PC-9 (cell line): ENCODE measurements at regions of chr2 and their contacts with region 1.

Region 1: DNA sequence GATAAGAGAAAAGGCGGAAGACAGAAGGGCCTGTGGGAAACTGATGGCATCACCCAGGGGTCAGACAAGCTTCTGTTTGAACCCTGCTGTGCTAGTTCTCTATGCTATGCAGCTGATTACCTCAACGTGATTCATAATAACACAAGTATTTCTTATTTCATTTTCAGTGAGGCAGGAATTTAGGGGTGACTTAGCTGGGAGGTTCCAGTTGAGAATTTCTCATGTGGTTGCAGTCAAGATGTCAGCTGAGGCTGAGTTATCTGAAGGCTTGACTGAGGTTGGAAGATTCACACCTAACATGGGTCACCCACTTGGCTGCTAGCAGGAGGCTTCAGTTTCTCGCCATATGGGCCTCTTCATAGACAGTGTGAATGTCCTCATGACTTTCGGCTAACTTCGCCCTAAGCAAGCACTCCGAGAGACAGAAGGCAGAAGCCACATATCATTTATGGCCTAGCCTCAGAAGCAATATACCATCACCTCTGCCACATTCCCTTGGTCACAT is 34.0 kb upstream of the TMEM131 start:
- DNase-seq: no peak
- H3K4me3 ChIP-seq: no peak overlapping the region
- H3K27ac ChIP-seq: no peak overlapping the region
- H3K4me1 ChIP-seq: no peaks in the 10 kb centered on the region
- H3K27me3 ChIP-seq: no peaks in the 10 kb centered on the region
- CTCF ChIP-seq: no peak

Region 2: DNA sequence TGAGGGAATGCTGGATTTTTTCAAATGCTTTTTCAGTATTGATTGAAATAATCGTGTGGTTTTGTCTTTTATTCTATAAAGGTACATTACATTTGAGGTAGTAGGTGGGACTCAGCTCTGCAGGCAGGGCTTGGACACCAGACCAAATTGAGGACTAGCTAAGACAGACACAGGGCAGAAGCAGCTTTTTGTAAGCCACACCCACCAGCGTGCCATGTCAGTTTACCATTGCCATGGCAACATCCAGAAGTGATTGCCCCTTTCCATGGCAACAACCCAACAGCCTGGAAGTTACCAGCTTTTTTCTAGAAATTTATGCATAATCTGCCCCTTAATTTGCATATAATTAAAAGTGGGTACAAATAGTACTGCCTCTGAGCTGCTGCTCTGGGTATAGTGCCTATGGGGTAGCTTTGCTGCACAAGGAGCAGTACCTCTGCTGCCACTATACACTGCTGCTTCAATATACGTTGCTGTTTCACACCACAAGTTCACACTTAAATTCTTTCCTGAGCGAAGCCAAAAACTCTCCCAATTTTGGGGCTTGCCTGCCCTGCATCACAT is 33.6 kb after region 1 on chr2:
- CTCF ChIA-PET with region 1: no interaction called
- POLR2A ChIA-PET with region 1: interaction called, 10 read pairs
- intact Hi-C with region 1: no loop called
- DNase-seq: no peak
- H3K4me3 ChIP-seq: no peak overlapping the region
- H3K27ac ChIP-seq: no peak overlapping the region
- H3K4me1 ChIP-seq: no peaks in the 10 kb centered on the region
- H3K27me3 ChIP-seq: no peaks in the 10 kb centered on the region; the same call in 1 of the 2 replicates
- CTCF ChIP-seq: no peak

Region 3: GRCh38 chr2:98086491-98087446 is 57.0 kb after region 1 on chr2 and contains the start of gene VWA3B:
- CTCF ChIA-PET with region 1: no interaction called
- POLR2A ChIA-PET with region 1: no interaction called
- intact Hi-C with region 1: no loop called
- DNase-seq: peak in 1 of 2 experiments; percentile 45
- H3K4me3 ChIP-seq: peak within 1 kb of the TSS; percentile 58
- H3K27ac ChIP-seq: no peak within 1 kb of the TSS
- H3K4me1 ChIP-seq: peaks cover 12% of the 10 kb centered on the region
- H3K27me3 ChIP-seq: no peaks in the 10 kb centered on the region
- CTCF ChIP-seq: no peak
- total RNA-seq, gene VWA3B: not detected in 2 replicates

Region 4: GRCh38 chr2:98532756-98533155 is 503.0 kb after region 1 on chr2:
- CTCF ChIA-PET with region 1: no interaction called
- POLR2A ChIA-PET with region 1: no interaction called
- intact Hi-C with region 1: no loop called
- DNase-seq: no peak
- H3K4me3 ChIP-seq: no peak overlapping the region
- H3K27ac ChIP-seq: no peak overlapping the region
- H3K4me1 ChIP-seq: no peaks in the 10 kb centered on the region
- H3K27me3 ChIP-seq: no peaks in the 10 kb centered on the region
- CTCF ChIP-seq: no peak